Left cardiac atrium (tissue), 4 donors: ENCODE measurements at regions of chr11 and their contacts with region 1.

Region 1: GRCh38 chr11:95512682-95513081 is 276.9 kb downstream of the FAM76B start:
- DNase-seq: peak; percentile 48
- ATAC-seq: peak; percentile 92 to 97

Region 2: GRCh38 chr11:95345651-95346050 is 167.0 kb before region 1 on chr11:
- intact Hi-C with region 1: loop called in 1 of 2 experiments (anchors 10 kb)
- DNase-seq: no peak
- ATAC-seq: no peak